ENCODE measurements at regions of chr16 and their contacts with region 1.

Region 1: GRCh38 chr16:79571065-79571902 is 29.3 kb downstream of the MAF start:
- DNase-seq: peak in 1 of 2 donors; percentile 26
- ATAC-seq: peak; percentile 13 to 82 (median 76)
- H3K4me3 ChIP-seq: peak overlapping the region in 8 of 10 donors; percentile 14 to 41 (median 33)
- H3K27ac ChIP-seq: peak overlapping the region in 3 of 10 donors; percentile 2 to 39 (median 15)
- H3K4me1 ChIP-seq: peaks cover 0 to 10% (median 0%) of the 10 kb centered on the region in 9 donors
- H3K27me3 ChIP-seq: peaks cover 0 to 29% (median 6%) of the 10 kb centered on the region in 7 donors
- CTCF ChIP-seq: no peak

Region 2: GRCh38 chr16:79328402-79329165 is 242.7 kb before region 1 on chr16:
- intact Hi-C with region 1: loop called in 1 of 10 experiments (anchors 10 kb)
- DNase-seq: no peak
- ATAC-seq: peak in 6 of 8 donors; percentile 22 to 73 (median 43)
- H3K4me3 ChIP-seq: no peak overlapping the region
- H3K27ac ChIP-seq: peak overlapping the region in 2 of 10 donors; percentile 22 to 80
- H3K4me1 ChIP-seq: peaks cover 0 to 13% (median 0%) of the 10 kb centered on the region in 9 donors
- H3K27me3 ChIP-seq: peaks cover 0 to 36% (median 7%) of the 10 kb centered on the region in 7 donors
- CTCF ChIP-seq: peak in 1 of 9 donors; percentile 7

Region 3: GRCh38 chr16:79589601-79590102 is 18.4 kb after region 1 on chr16:
- intact Hi-C with region 1: loop called in 1 of 10 experiments (anchors 1 kb)
- DNase-seq: peak in 1 of 2 donors; percentile 17
- ATAC-seq: peak in 7 of 8 donors; percentile 35 to 62 (median 42)
- H3K4me3 ChIP-seq: peak overlapping the region; percentile 29 to 69 (median 56)
- H3K27ac ChIP-seq: peak overlapping the region in 8 of 10 donors; percentile 29 to 74 (median 58)
- H3K4me1 ChIP-seq: peaks cover 0 to 37% (median 8%) of the 10 kb centered on the region in 9 donors
- H3K27me3 ChIP-seq: peaks cover 0 to 27% (median 14%) of the 10 kb centered on the region in 7 donors
- CTCF ChIP-seq: peak in 1 of 9 donors; percentile 17

Region 4: GRCh38 chr16:79601931-79602627 is 30.8 kb after region 1 on chr16:
- intact Hi-C with region 1: no loop called
- DNase-seq: peak; percentile 63 to 88
- ATAC-seq: peak; percentile 8 to 68 (median 51)
- H3K4me3 ChIP-seq: peak overlapping the region; percentile 57 to 85 (median 72)
- H3K27ac ChIP-seq: peak overlapping the region; percentile 64 to 96 (median 92)
- H3K4me1 ChIP-seq: peaks cover 0 to 19% (median 6%) of the 10 kb centered on the region in 9 donors
- H3K27me3 ChIP-seq: peaks cover 0 to 5% (median 0%) of the 10 kb centered on the region in 7 donors
- CTCF ChIP-seq: peak; percentile 68 to 85 (median 80)